Heart left ventricle (tissue), 16 donors: ENCODE measurements at regions of chr7 and their contacts with region 1.

Region 1: GRCh38 chr7:141251957-141252356 is 178.1 kb downstream of the TMEM178B start:
- DNase-seq: no peak
- ATAC-seq: peak in 1 of 4 donors; percentile 41
- H3K4me3 ChIP-seq: no peak overlapping the region
- H3K27ac ChIP-seq: no peak overlapping the region
- H3K4me1 ChIP-seq: no peaks in the 10 kb centered on the region
- H3K27me3 ChIP-seq: no peaks in the 10 kb centered on the region
- CTCF ChIP-seq: peak in 5 of 12 donors; percentile 12 to 28 (median 18)
- POLR2A ChIP-seq: no peak

Region 2: GRCh38 chr7:141522657-141523342 is 270.8 kb after region 1 on chr7:
- intact Hi-C with region 1: loop called in 2 of 10 experiments (anchors 10 kb)
- DNase-seq: no peak
- ATAC-seq: no peak
- H3K4me3 ChIP-seq: no peak overlapping the region
- H3K27ac ChIP-seq: no peak overlapping the region
- H3K4me1 ChIP-seq: no peaks in the 10 kb centered on the region
- H3K27me3 ChIP-seq: no peaks in the 10 kb centered on the region
- CTCF ChIP-seq: no peak
- POLR2A ChIP-seq: no peak